ENCODE measurements at regions of chr5 and their contacts with region 1.

Region 1: DNA sequence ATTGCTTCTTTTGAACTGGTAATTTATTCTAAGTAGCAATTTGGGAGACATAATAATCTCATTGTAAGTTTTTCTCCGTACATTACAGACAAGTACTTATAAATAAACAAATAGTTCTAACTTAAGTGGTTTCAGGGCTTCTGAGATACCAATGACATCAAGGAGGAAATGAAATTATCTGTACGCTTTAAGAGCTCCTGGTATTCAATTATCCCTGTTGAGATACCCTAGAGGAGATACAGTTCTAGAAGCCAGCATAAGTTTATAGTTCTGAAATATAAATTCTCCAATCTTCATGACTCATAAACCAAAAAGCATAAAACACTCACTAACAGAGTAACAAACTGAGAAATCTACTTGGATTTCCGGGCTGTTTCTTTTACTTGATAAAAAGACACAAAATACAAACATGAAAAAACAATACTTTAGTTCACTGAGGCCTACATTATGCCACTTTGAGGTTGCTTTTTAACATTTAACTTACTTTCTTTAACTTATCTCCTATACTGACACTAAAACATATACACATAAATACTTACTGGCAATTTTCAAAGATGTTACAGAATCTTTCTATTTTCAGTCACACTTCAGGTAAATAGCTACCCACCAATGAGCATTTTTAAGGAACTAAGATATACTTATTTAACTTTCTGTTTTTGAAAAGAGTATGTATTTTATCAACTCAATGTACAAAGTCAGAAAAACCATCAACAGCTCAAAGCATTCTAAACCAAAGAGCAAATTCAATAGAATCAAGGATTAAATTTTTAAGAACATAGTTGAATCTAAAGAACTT is 7.5 kb downstream of the DCTN4 start:
- DNase-seq: no peak
- ATAC-seq: peak; percentile 78
- H3K4me3 ChIP-seq: peak overlapping the region; percentile 17
- H3K27ac ChIP-seq: peak overlapping the region; percentile 22; the same call in 1 of the 2 replicates
- H3K4me1 ChIP-seq: no peaks in the 10 kb centered on the region; the same call in 1 of the 2 replicates
- H3K27me3 ChIP-seq: no peaks in the 10 kb centered on the region
- CTCF ChIP-seq: no peak
- EP300 ChIP-seq: no peak
- POLR2A ChIP-seq: no peak
- RAD21 ChIP-seq: no peak

Region 2: GRCh38 chr5:150700594-150701293 is 50.5 kb before region 1 on chr5 and contains the start of gene RBM22:
- CTCF ChIA-PET with region 1: interaction called, 20 read pairs
- POLR2A ChIA-PET with region 1: interaction called, 3 read pairs
- RAD21 ChIA-PET with region 1: no interaction called
- SMC1A ChIA-PET with region 1: interaction called, 3 read pairs
- in situ Hi-C with region 1: no loop called
- intact Hi-C with region 1: no loop called
- DNase-seq: peak; percentile 57
- ATAC-seq: peak; percentile 98
- H3K4me3 ChIP-seq: peak within 1 kb of the TSS; percentile 91
- H3K27ac ChIP-seq: peak within 1 kb of the TSS; percentile 87
- H3K4me1 ChIP-seq: no peaks in the 10 kb centered on the region
- H3K27me3 ChIP-seq: no peaks in the 10 kb centered on the region
- CTCF ChIP-seq: peak; percentile 57 to 70 (median 60)
- EP300 ChIP-seq: peak in 1 of 2 experiments; percentile 22; a peak in 1 of 4 replicates
- POLR2A ChIP-seq: peak; percentile 93
- RAD21 ChIP-seq: peak; percentile 29; the same call in 1 of the 2 replicates
- polyA plus RNA-seq, gene RBM22: 26.3 to 40.3 TPM

Region 3: DNA sequence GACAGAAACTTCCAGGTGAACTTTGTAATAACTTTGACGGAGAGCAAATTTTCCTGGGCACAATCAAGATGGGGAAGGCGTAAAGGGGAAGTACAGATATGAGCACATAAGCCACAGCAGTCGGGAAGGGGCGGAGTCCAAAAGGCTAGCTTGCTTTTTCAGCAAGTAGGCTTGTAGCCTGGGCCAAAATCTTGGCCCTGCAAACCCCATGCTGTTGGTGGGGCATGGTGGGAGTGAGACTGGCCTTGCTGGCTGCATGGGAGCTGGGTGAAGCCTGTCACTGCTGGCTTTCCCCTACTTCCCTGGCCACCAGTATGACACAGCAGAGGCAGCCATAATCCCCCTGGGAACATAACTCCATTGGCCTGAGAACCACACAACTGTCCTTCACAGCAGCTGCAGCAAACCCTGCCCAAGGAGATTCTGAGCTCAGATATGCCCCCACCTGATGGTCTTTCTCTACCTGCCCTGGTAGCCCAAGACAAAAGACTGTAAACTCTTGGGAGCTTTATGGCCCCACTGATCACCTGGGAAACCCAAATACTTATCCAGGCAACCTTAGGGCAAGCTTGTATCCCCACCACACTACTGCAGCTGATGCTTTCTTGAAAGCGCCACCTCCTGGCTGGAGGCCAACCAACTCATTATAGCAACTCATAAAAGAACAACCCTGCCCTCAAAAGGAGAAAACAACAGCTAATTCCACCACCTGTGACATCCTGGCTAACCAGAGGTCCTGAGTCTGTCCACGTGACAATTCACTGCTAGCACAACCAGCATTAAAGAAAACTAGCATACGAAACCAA is 16.5 kb before region 1 on chr5:
- CTCF ChIA-PET with region 1: interaction called, 19 read pairs
- POLR2A ChIA-PET with region 1: interaction called, 6 read pairs
- RAD21 ChIA-PET with region 1: interaction called, 5 read pairs
- SMC1A ChIA-PET with region 1: interaction called, 25 read pairs
- in situ Hi-C with region 1: no loop called
- intact Hi-C with region 1: no loop called
- DNase-seq: peak; percentile 53
- ATAC-seq: peak; percentile 96
- H3K4me3 ChIP-seq: no peak overlapping the region
- H3K27ac ChIP-seq: peak overlapping the region; percentile 67
- H3K4me1 ChIP-seq: peaks cover 14% of the 10 kb centered on the region
- H3K27me3 ChIP-seq: no peaks in the 10 kb centered on the region
- CTCF ChIP-seq: peak; percentile 10 to 21 (median 19); a peak in 3 of 6 replicates
- EP300 ChIP-seq: no peak
- POLR2A ChIP-seq: no peak
- RAD21 ChIP-seq: no peak

Measured in GM12878 (cell line).